ENCODE measurements at regions of chr5 and their contacts with region 1.

Region 1: GRCh38 chr5:79020861-79021561 is 35.9 kb upstream of the ARSB start:
- DNase-seq: peak; percentile 20 to 89
- H3K4me3 ChIP-seq: no peak overlapping the region
- CTCF ChIP-seq: no peak
- POLR2A ChIP-seq: no peak

Region 2: DNA sequence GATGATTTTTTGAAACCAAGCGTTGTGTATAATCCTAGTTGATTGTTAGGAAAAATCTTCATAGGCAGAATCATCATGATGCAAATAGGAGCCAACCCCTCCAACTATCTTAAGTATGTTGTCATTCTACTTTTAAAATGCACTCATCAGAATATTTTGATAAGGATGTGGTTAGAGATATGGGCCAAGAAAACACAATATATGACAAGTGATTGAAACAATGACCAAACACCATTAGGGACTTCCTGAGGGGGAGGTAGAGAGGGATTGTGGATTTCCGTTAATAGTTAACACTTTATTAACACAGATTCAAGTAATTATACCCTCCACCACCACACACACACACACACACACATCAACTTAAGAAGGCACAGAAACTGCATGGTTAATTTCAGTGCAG is 179.2 kb before region 1 on chr5:
- intact Hi-C with region 1: no loop called
- DNase-seq: no peak
- H3K4me3 ChIP-seq: no peak overlapping the region
- CTCF ChIP-seq: no peak
- POLR2A ChIP-seq: no peak

Region 3: DNA sequence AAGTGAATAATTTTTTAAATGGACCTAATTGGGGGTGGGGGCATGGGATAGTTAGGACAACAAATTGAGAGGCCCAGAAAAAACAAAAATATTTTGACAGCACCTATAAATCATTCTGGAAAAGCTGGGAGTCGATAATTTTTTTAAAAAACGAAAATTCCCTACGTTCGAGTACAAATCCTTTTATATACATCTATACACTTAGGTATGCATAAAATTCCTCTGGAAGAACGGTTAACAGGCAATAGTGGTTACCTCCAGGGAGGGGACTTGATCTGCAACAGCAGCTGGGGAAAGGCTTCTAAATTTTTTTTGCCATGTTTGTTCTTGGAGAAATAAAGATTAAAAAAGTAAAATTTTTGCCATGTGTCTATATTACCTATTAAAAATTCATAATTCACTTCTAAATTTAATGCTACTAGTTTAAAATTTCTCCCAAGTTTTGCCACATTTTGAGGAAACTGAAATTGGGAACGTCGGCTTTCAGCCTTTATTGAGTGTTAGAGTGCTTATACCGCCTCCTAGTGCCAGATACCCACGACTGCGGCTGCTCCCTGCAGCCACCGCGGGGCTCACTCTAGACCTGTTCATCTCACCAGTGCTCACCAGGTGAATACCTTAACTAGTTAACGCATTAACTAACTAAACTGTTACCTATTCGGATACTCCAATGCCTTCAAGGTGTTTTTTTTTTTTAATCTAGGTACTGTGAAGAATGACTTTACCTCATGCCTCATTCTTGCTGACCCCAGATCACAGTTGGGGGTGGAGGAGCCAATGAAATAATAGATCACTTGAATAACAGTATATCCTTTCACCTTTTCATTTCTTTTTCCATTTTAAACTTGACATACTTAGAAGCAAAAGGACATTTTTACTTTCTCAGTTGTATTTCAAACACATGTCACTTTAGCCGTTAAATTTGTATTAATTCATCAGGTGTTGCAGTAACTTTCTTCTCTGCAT is 88.8 kb after region 1 on chr5:
- intact Hi-C with region 1: loop called (anchors 10 kb)
- DNase-seq: no peak
- H3K4me3 ChIP-seq: no peak overlapping the region
- CTCF ChIP-seq: no peak
- POLR2A ChIP-seq: no peak

Region 4: DNA sequence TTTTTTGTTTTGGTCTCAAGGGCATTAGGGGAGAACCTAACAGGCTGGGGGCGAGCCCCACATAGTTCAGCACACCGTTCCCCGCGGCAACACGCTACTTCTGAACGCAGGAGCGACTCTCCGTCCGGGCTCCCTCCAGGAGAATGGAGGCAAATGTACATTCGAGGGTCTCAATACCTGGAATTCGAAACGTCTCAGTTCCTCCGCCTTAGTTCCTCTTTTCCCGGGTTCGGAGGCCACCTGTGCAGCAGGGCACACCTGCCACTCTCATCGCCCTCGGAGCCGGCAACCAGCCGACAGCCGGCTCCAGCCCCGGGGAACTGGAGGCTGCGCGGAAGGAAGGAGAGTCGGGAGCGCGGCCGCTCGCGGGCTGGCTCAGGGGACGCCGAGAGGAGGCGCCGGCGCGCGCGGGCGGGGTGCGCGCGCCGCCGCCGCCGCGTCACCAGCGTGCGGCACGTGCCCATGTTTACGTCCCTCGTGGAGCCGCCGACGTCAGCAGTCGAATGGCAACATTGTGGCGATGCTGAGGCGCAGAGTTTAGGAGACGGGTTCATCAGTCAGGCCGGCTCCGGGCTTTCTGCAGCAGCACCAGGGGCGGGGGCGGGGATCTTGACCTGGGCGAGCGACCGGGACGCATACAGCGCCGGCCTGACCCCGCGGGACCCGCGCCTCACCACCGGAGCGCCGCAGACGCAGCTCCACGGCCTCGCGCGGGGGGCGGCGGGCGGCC is 214.8 kb after region 1 on chr5 and contains the start of gene JMY:
- intact Hi-C with region 1: no loop called
- DNase-seq: peak; percentile 85 to 96
- H3K4me3 ChIP-seq: peak within 1 kb of the TSS; percentile 80
- CTCF ChIP-seq: no peak
- POLR2A ChIP-seq: peak in 1 of 2 donors; percentile 30
- total RNA-seq, gene JMY: 25.6 to 38.8 (median 30.5) TPM

Region 5: GRCh38 chr5:79464695-79465332 is 443.8 kb after region 1 on chr5:
- intact Hi-C with region 1: loop called (anchors 10 kb)
- DNase-seq: no peak
- H3K4me3 ChIP-seq: no peak overlapping the region
- CTCF ChIP-seq: no peak
- POLR2A ChIP-seq: no peak

Region 6: GRCh38 chr5:79699766-79700415 is 678.9 kb after region 1 on chr5:
- intact Hi-C with region 1: no loop called
- DNase-seq: no peak
- H3K4me3 ChIP-seq: no peak overlapping the region
- CTCF ChIP-seq: no peak
- POLR2A ChIP-seq: no peak

Measured in lower leg skin (tissue), 4 donors.